Activated CD8-positive, alpha-beta T cell treated with anti-CD3 and anti-CD28 coated beads, Interleukin-2, amount 10 ng/mL, durations not matched to agents 7 days and 5 days (primary cell): ENCODE measurements at regions of chr5 and their contacts with region 1.

Region 1: GRCh38 chr5:177390363-177391300 is 6.4 kb downstream of the SLC34A1 start:
- DNase-seq: peak; percentile 94
- ATAC-seq: peak; percentile 84
- H3K4me3 Mint-ChIP-seq: peak overlapping the region; percentile 19
- H3K27ac Mint-ChIP-seq: peak overlapping the region; percentile 93
- H3K4me1 Mint-ChIP-seq: peaks cover 59% of the 10 kb centered on the region
- H3K27me3 Mint-ChIP-seq: peaks cover 3% of the 10 kb centered on the region

Region 2: DNA sequence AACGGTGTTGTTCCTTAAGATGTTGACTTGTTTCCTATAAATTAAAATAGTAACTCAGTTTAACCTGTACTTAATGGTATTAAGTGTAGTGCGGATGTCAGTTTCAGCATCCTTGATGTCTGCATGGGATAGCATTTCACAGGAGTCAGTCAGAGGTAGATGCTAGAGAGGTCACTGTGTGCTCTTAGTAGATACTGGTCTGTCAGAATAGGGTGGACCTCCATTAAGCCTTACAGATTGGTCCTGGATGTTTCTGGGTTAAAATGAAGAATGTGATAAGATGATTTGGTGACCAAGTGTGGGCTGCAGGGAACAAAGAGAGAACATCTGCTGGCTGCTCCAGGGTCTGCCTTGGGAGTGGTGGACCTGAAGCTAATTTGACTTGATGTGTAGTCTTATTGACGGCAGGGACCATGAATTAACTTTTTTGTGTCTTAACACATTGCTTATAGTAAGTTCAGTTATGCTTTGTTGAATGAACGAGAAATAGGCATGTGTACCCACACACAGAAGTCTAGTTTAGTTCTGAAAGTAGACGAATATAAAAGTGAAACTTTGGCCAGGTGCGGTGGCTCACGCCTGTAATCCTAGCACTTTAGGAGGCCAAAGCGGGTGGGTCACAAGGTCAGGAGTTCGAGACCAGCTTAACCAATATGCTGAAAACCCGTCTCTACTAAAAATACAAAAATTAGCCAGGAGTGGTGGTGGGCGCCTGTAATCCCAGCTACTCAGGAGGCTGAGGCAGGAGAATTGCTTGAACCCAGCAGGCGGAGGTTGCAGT is 99.6 kb before region 1 on chr5:
- CTCF ChIA-PET with region 1: no interaction called
- POLR2A ChIA-PET with region 1: no interaction called
- DNase-seq: no peak
- ATAC-seq: no peak
- H3K4me3 Mint-ChIP-seq: no peak overlapping the region
- H3K27ac Mint-ChIP-seq: no peak overlapping the region
- H3K4me1 Mint-ChIP-seq: peaks cover 21% of the 10 kb centered on the region
- H3K27me3 Mint-ChIP-seq: no peaks in the 10 kb centered on the region

Region 3: GRCh38 chr5:177311723-177312648 is 78.6 kb before region 1 on chr5 and contains the start of gene MXD3:
- CTCF ChIA-PET with region 1: interaction called, 41 read pairs
- POLR2A ChIA-PET with region 1: interaction called, 5 read pairs
- DNase-seq: peak; percentile 99
- ATAC-seq: peak; percentile 87
- H3K4me3 Mint-ChIP-seq: peak within 1 kb of the TSS; percentile 95
- H3K27ac Mint-ChIP-seq: peak within 1 kb of the TSS; percentile 93
- H3K4me1 Mint-ChIP-seq: peaks cover 55% of the 10 kb centered on the region
- H3K27me3 Mint-ChIP-seq: no peaks in the 10 kb centered on the region
- total RNA-seq, gene MXD3: 93.2 to 96.9 TPM

Region 4: GRCh38 chr5:177357459-177358351 is 32.9 kb before region 1 on chr5 and contains the start of gene RGS14:
- CTCF ChIA-PET with region 1: interaction called, 27 read pairs
- POLR2A ChIA-PET with region 1: interaction called, 3 read pairs
- DNase-seq: peak; percentile 82
- ATAC-seq: peak; percentile 91
- H3K4me3 Mint-ChIP-seq: peak within 1 kb of the TSS; percentile 90
- H3K27ac Mint-ChIP-seq: peak within 1 kb of the TSS; percentile 94
- H3K4me1 Mint-ChIP-seq: peaks cover 80% of the 10 kb centered on the region
- H3K27me3 Mint-ChIP-seq: no peaks in the 10 kb centered on the region
- total RNA-seq, gene RGS14: 112 to 117 TPM

Region 5: GRCh38 chr5:177403792-177404640 is 13.4 kb after region 1 on chr5:
- CTCF ChIA-PET with region 1: interaction called, 270 read pairs
- POLR2A ChIA-PET with region 1: interaction called, 25 read pairs
- DNase-seq: peak; percentile 89
- ATAC-seq: peak; percentile 92
- H3K4me3 Mint-ChIP-seq: peak overlapping the region; percentile 78
- H3K27ac Mint-ChIP-seq: peak overlapping the region; percentile 74
- H3K4me1 Mint-ChIP-seq: peaks cover 48% of the 10 kb centered on the region
- H3K27me3 Mint-ChIP-seq: peaks cover 21% of the 10 kb centered on the region

Region 6: GRCh38 chr5:177431317-177432142 is 40.9 kb after region 1 on chr5:
- CTCF ChIA-PET with region 1: interaction called, 56 read pairs
- POLR2A ChIA-PET with region 1: interaction called, 14 read pairs
- DNase-seq: peak; percentile 90
- ATAC-seq: peak; percentile 59
- H3K4me3 Mint-ChIP-seq: peak overlapping the region; percentile 97
- H3K27ac Mint-ChIP-seq: peak overlapping the region; percentile 93
- H3K4me1 Mint-ChIP-seq: peaks cover 76% of the 10 kb centered on the region
- H3K27me3 Mint-ChIP-seq: no peaks in the 10 kb centered on the region

Region 7: DNA sequence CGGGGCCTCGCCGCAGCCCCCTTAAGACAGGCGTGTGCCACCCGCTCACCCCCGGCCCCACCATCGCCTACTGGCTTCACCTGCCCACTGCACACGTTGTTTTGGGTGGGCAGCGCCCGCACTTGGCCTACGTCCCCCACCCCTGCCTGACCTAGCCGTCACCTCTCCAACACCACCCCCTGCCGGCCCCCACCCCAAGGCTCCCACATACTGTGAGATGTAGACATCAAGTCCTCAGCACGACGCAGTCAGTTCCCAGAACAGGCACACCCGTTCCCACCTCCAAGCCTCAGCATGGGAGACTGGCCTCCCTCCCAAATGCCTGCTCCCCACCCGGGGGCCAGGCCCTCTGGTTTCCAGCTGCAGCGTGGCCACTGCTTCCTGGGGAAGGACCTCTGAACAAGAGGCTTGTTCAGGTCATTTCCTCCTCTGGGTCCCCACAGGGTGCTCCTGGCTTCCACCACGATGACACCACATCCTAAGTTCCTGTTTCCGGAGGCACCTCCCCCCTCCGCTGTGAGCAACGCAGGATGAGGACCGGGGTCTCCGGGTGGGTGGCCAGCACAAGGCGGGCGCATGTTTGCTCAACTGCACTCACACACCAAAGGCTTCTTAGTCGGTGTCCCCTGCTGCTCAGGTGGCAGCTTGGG is 71.5 kb after region 1 on chr5:
- CTCF ChIA-PET with region 1: interaction called, 51 read pairs
- POLR2A ChIA-PET with region 1: no interaction called
- DNase-seq: peak; percentile 52
- ATAC-seq: peak; percentile 24
- H3K4me3 Mint-ChIP-seq: peak overlapping the region; percentile 56
- H3K27ac Mint-ChIP-seq: peak overlapping the region; percentile 93
- H3K4me1 Mint-ChIP-seq: peaks cover 32% of the 10 kb centered on the region
- H3K27me3 Mint-ChIP-seq: no peaks in the 10 kb centered on the region

Region 8: GRCh38 chr5:177497292-177498033 is 106.8 kb after region 1 on chr5 and contains the start of gene PDLIM7:
- CTCF ChIA-PET with region 1: interaction called, 97 read pairs
- POLR2A ChIA-PET with region 1: interaction called, 5 read pairs
- DNase-seq: peak; percentile 97
- ATAC-seq: peak; percentile 91
- H3K4me3 Mint-ChIP-seq: peak within 1 kb of the TSS; percentile 82
- H3K27ac Mint-ChIP-seq: peak within 1 kb of the TSS; percentile 67
- H3K4me1 Mint-ChIP-seq: peaks cover 61% of the 10 kb centered on the region
- H3K27me3 Mint-ChIP-seq: peaks cover 18% of the 10 kb centered on the region
- total RNA-seq, gene PDLIM7: 62.5 to 67.3 TPM